ENCODE measurements at regions of chr11 and their contacts with region 1.

Region 1: DNA sequence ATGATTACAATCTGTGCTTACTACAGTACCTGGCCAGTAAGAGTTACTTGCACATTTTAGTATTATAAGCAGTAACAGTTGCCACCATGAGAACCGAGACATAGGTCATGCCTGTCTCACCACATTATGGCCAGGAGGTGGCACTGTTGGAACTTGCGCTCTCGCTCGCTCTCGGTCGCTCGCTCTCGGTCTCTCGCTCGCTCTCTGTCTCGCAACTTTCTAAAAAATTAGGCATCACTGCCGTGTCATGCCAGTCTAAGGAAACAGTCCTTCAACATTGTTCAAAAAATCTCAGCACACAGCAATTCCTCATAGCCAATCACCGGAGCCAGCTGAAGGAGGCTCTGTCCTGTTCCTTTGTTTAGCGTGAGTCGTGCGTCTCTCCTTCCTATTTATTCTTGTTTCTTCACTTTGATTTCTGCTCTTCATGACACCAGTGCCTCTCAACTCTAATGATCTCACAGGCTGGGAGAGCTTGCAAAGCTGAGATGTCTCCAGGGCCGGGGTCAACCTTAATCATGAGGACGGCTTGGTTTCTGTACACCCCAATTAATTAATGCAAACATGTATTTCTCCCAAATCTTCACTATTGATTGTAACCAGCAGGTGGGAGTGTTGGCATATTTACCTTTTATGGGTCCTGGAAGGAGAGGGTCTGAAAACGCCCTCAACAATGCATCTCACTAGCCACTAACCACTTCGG is 6.3 kb upstream of the ADAMTS8 start:
- DNase-seq: peak; percentile 78
- ATAC-seq: peak; percentile 94 to 95
- H3K4me3 ChIP-seq: peak overlapping the region; percentile 65
- H3K27ac ChIP-seq: peak overlapping the region; percentile 56
- H3K4me1 ChIP-seq: peaks cover 4% of the 10 kb centered on the region
- H3K27me3 ChIP-seq: peaks cover 14% of the 10 kb centered on the region
- CTCF ChIP-seq: peak; percentile 78

Region 2: DNA sequence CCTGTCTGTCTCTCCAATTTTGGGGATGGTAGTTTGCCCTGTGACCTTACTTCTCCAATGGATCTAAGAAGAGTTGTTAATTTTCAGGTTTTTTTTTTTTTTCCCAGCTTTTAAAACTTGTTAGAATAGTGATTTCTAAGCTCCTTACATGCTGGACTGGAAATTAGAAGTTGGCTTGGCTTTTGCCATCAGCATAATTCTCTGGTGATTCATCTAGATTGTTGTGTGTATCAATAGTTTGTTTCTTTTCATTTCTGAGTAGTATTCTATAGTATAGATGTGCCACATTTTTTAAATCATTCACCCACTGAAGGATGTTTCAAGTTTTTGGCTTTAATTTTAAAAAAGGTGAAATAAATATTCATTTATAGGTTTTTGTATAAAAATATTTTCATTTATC is 65.2 kb after region 1 on chr11:
- intact Hi-C with region 1: no loop called
- DNase-seq: no peak
- ATAC-seq: no peak
- H3K4me3 ChIP-seq: no peak overlapping the region
- H3K27ac ChIP-seq: no peak overlapping the region
- H3K4me1 ChIP-seq: no peaks in the 10 kb centered on the region
- H3K27me3 ChIP-seq: no peaks in the 10 kb centered on the region
- CTCF ChIP-seq: no peak

Region 3: DNA sequence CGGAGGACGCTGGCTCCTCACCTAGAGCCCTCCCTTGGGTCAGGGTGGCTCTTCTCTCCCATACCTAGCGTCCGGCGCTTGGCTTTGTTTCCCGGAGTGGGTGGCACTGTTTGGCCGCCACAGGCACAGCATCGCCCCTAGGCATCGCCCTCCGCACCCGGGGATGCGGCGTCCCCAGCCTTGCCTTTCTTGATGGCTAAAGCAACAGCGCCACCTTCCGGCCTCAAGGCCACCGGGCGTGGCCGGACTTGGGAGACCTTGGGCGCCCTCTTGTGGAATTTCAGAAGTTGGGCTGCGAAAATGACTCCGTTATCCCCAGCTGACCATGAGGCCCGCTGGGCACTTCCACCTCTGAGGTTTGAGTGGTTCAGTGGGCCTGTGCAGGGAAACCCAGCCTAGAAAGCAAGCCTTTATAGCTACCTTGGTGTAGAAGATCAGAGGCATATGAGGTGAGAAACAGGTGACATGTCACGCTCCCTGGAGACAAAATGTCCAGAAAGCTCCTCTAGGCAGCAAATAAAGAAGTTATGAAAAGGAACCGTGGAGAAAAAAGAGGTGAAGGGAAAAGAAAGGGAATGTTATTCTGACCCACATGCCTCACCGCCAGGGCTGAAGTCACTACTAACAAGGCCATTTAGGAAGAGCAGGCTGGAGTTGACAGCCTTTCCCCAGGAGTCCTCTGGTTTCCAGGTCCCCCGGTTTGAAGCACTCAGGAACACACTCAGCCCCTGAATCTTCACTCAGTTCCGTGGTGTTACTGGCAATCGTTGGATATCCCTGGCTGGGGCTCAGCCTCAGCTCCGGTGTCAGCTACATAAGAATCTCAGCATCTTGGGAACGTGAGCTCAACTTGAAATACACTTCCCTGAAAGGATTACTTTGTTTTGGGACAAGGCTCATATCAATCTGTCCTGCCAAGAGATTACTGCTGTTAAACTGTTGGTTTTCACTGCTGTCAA is 427.5 kb after region 1 on chr11:
- intact Hi-C with region 1: loop called (anchors 5 kb)
- DNase-seq: peak; percentile 94
- ATAC-seq: peak; percentile 87 to 93
- H3K4me3 ChIP-seq: no peak overlapping the region
- H3K27ac ChIP-seq: no peak overlapping the region
- H3K4me1 ChIP-seq: peaks cover 9% of the 10 kb centered on the region
- H3K27me3 ChIP-seq: no peaks in the 10 kb centered on the region
- CTCF ChIP-seq: peak; percentile 100